OCI-LY7 (cell line): ENCODE measurements at regions of chr1 and their contacts with region 1.

Region 1: DNA sequence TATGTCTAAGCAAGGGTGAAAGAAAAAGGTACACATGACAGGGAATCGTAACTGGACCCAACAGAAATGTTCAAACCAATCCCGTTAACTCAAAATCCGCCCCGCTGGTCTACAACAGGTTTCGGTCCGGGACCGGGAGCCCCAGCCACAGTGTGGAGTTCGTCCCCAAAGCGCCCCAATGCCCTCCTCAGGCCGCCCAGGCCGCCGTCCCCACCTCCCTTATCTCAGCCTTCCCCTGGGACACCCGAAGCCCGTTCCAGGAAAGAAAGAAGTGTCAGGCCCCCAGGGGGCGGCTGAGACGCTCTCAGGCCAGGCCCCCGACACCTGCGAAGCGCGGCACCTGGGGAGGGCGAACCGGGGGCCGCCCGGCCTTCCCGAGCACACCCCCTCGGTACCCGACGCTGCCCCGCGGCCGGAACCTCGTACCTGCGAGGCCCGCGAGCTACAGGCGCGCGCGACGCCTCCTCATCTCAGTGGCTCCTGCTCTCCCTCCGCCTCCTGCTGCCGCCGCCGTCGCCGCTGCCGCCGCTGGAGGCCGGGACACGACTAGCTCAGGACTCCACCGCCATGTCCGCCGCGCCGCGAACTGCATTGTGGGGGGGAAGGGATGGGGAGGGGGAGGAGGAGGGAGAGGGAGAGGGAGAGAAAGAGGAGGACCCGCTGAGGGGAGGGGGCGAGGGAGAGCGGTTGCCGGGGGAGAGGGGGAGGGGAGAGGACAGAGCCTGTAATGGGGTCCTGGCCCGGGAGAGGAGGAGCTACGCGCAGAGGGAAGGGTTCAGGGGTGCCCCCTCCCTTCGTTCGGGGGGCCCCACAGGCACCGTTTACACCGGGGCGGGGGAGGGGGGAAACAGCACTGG is at the start of gene TUT4:
- DNase-seq: peak; percentile 85
- H3K4me3 ChIP-seq: peak within 1 kb of the TSS; percentile 77
- H3K27ac ChIP-seq: peak within 1 kb of the TSS; percentile 78
- H3K4me1 ChIP-seq: peaks cover 27% of the 10 kb centered on the region
- CTCF ChIP-seq: peak; percentile 49
- total RNA-seq, gene TUT4: 72.4 and 102 TPM in 2 replicates

Region 2: GRCh38 chr1:52306227-52307006 is 246.3 kb before region 1 on chr1:
- CTCF ChIA-PET with region 1: no interaction called
- POLR2A ChIA-PET with region 1: no interaction called
- intact Hi-C with region 1: no loop called
- DNase-seq: peak; percentile 35
- H3K4me3 ChIP-seq: no peak overlapping the region
- H3K27ac ChIP-seq: no peak overlapping the region
- H3K4me1 ChIP-seq: no peaks in the 10 kb centered on the region
- CTCF ChIP-seq: no peak

Region 3: DNA sequence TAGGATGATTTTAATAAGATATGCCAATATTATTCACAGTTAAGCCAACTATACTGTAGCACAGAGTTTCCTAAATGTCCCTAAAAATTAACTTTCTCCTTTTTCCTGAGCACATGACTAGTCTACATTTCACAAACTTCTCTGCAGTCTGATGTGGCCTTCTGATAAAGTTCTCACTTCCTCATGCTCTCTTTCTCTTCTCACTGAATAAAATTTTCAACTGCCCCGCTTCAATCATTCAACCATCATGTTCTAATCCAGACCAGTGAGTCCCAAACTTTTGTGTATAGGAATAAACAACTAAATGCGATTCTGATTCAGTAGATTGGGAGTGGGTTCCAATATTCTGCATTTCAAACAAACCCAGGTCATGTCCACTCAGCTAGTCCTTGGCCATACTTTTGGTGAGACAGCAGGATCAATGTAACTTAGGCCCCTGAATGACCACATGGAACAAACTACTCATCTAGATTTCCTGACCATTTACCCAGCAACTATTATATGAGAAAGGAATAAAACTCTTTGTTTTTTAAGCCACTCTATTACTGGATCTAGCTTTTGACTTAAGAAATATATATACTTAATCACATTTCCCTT is 19.9 kb before region 1 on chr1:
- CTCF ChIA-PET with region 1: no interaction called
- POLR2A ChIA-PET with region 1: interaction called, 10 read pairs
- intact Hi-C with region 1: no loop called
- DNase-seq: no peak
- H3K4me3 ChIP-seq: no peak overlapping the region
- H3K27ac ChIP-seq: no peak overlapping the region
- H3K4me1 ChIP-seq: peaks cover 19% of the 10 kb centered on the region
- CTCF ChIP-seq: no peak

Region 4: GRCh38 chr1:52567943-52568342 is 15.2 kb after region 1 on chr1:
- CTCF ChIA-PET with region 1: no interaction called
- POLR2A ChIA-PET with region 1: interaction called, 10 read pairs
- intact Hi-C with region 1: no loop called
- DNase-seq: no peak
- H3K4me3 ChIP-seq: no peak overlapping the region
- H3K27ac ChIP-seq: no peak overlapping the region
- H3K4me1 ChIP-seq: peaks cover 14% of the 10 kb centered on the region
- CTCF ChIP-seq: no peak; the same call in 1 of the 2 replicates

Region 5: DNA sequence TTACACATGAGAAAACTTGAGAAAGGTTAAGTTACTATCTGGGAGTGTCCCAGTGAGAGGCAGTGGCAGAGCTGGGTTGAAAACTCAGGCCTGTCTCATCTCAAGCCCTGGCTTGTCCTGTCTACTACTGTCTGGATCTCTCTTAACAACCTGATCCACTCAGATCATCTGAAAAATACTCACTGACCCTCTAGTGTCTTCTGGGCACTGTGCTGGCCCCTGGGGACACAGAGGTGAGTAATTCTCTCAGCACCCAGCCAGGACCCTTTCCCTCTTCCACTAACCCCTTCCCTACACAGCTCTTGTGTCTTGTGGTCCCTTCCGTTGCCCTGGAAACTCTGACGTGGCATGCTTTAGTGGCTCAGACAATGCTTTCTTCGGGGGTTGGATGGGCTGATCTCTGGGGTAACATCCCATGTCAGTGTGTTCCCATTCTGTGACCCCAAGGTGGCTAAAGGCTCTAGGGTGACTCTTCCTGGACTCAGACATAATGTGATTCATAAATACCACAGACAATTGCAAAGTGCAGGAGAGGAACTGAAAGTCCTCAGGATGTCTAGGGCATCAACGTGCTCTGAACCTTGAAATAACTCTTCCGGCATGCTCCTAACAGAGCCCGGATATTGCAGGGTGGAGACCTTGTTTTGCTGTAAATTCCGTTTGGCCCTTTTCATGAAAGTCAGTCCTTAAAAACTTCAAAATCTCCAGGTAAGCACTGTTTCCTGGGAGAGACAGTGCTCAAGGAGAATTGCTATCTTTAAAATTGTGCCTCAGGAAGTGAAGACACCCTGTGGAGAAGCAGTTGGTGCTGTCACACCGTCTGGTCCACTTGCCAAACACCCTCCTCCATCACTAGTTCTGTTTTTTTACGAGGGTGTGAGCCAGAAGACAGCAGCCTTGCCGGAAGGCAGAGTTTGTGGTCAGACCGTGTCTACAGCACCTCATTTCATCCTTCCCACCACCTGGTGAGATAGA is 84.3 kb after region 1 on chr1:
- CTCF ChIA-PET with region 1: no interaction called
- POLR2A ChIA-PET with region 1: interaction called, 4 read pairs
- intact Hi-C with region 1: loop called (anchors 1 kb)
- DNase-seq: peak; percentile 96
- H3K4me3 ChIP-seq: peak overlapping the region; percentile 53
- H3K27ac ChIP-seq: peak overlapping the region; percentile 96
- H3K4me1 ChIP-seq: peaks cover 77% of the 10 kb centered on the region
- CTCF ChIP-seq: no peak

Region 6: DNA sequence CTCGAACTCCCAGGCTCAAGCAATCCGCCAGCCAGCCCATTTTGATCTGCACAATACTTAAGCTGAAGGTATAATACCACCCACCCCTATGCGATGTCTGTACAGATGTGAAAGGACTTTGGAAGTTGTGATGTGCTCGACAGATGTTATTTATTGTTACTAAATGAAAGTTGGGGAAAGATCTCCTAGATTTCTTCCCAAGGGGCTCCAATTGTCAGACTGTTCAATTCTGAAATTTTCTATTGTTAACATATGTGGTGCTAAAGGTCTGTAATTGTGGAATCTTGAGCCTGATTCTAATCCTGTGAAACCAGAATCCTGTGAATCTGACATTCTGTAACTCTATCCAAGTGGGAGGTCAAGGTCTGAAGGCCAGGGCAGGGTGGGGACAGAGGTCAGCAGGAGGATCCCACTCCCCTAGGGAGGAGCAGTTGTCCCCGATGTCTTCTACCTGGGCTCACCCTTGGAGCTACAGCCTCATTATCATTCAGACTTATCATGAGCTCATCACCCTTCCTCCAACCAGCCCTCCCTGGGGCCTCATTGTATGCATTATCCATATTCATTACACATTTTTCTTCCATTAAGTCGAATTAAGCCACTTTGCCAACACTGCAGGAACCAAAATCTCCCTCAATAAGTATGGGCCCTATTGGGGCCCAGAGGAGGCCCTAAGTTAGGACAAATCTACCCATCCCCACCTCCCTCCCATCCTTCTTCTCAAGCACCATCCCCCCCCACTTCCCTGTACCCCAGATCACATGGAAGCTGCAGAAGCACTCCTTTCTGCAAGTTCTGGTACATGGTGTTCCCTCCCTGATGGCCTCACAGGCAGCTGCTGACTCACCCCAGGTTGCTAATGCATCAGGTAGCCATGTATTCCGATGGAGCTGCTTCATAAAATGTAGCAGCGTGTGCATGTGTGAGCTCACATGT is 112.5 kb after region 1 on chr1:
- CTCF ChIA-PET with region 1: interaction called, 5 read pairs
- POLR2A ChIA-PET with region 1: no interaction called
- intact Hi-C with region 1: loop called (anchors 5 kb)
- DNase-seq: no peak
- H3K4me3 ChIP-seq: no peak overlapping the region
- H3K27ac ChIP-seq: no peak overlapping the region
- H3K4me1 ChIP-seq: no peaks in the 10 kb centered on the region
- CTCF ChIP-seq: no peak

Region 7: GRCh38 chr1:52686830-52687229 is 134.1 kb after region 1 on chr1:
- CTCF ChIA-PET with region 1: no interaction called
- POLR2A ChIA-PET with region 1: interaction called, 4 read pairs
- intact Hi-C with region 1: loop called (anchors 5 kb)
- DNase-seq: no peak
- H3K4me3 ChIP-seq: no peak overlapping the region
- H3K27ac ChIP-seq: no peak overlapping the region
- H3K4me1 ChIP-seq: peaks cover 3% of the 10 kb centered on the region
- CTCF ChIP-seq: no peak